Activated naive CD4-positive, alpha-beta T cell treated with anti-CD3 and anti-CD28 coated beads, Interleukin-2, amount 10 ng/mL, durations not matched to agents 7 days and 5 days (primary cell): ENCODE measurements at regions of chr12 and their contacts with region 1.

Region 1: GRCh38 chr12:112992541-112993398 is 14.5 kb downstream of the OAS2 start:
- DNase-seq: peak; percentile 81
- H3K4me3 Mint-ChIP-seq: no peak overlapping the region
- H3K27ac Mint-ChIP-seq: peak overlapping the region; percentile 46
- H3K4me1 Mint-ChIP-seq: peaks cover 40% of the 10 kb centered on the region
- H3K27me3 Mint-ChIP-seq: no peaks in the 10 kb centered on the region

Region 2: GRCh38 chr12:112524676-112525505 is 467.9 kb before region 1 on chr12:
- CTCF ChIA-PET with region 1: no interaction called
- DNase-seq: no peak
- H3K4me3 Mint-ChIP-seq: no peak overlapping the region
- H3K27ac Mint-ChIP-seq: no peak overlapping the region
- H3K4me1 Mint-ChIP-seq: no peaks in the 10 kb centered on the region
- H3K27me3 Mint-ChIP-seq: no peaks in the 10 kb centered on the region

Region 3: GRCh38 chr12:112768278-112768677 is 224.5 kb before region 1 on chr12:
- CTCF ChIA-PET with region 1: no interaction called
- DNase-seq: no peak
- H3K4me3 Mint-ChIP-seq: no peak overlapping the region
- H3K27ac Mint-ChIP-seq: no peak overlapping the region
- H3K4me1 Mint-ChIP-seq: no peaks in the 10 kb centered on the region
- H3K27me3 Mint-ChIP-seq: peaks cover 3% of the 10 kb centered on the region

Region 4: DNA sequence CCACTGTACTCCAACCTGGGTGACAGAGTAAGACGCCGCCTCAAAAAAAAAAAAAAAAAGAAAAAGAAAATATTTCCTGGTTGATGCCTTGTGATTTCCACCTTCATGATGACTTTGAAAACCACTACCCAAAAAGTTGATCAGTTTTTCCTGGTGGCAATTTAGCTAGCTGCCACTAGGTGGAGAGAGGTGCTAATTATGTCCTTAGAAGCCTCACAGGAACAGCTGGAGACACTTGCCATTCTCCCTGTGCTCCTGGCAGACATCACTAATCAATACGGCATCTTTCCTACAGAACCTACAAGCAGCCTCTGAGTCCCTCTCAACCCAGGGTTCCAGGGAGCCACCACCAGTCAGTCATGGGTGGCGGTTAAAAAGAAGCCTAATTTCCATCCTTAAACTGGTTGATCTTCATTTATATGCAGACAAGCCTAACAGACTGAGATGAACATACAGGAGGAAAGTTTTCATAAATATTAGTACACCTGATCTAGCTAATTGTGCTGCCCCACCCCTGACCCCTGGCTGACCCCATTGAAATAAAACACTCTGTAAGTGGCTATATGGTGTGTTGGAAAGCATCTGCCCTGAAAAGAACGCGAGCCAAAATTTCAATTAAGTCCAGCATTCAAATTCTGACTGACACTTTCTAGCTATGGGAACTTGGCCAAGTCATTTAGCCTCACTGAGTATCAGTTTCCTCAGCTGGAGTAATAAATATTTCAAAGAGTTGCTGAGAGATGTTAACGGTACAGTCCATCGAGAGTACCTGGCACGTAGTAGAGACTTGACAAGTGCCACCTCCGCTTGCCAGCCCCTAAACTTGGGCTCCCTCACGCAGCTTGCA is 92.2 kb before region 1 on chr12:
- CTCF ChIA-PET with region 1: interaction called, 40 read pairs
- DNase-seq: peak; percentile 57
- H3K4me3 Mint-ChIP-seq: no peak overlapping the region
- H3K27ac Mint-ChIP-seq: no peak overlapping the region
- H3K4me1 Mint-ChIP-seq: peaks cover 38% of the 10 kb centered on the region
- H3K27me3 Mint-ChIP-seq: peaks cover 29% of the 10 kb centered on the region

Region 5: DNA sequence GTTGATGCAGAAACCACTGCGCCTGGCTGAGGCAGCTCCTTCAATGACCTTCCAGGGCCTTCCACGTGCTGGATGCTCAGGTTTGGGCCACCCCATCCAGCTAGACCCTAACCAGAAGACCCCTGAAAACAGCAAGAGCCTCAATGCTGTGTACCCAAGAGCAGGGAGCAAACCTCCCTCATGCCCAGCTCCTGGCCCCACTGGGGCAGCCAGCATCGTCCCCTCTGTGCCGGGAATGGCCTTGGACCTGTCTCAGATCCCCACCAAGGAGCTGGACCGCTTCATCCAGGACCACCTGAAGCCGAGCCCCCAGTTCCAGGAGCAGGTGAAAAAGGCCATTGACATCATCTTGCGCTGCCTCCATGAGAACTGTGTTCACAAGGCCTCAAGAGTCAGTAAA is 44.0 kb before region 1 on chr12:
- CTCF ChIA-PET with region 1: interaction called, 10 read pairs
- DNase-seq: no peak
- H3K4me3 Mint-ChIP-seq: no peak overlapping the region
- H3K27ac Mint-ChIP-seq: no peak overlapping the region
- H3K4me1 Mint-ChIP-seq: no peaks in the 10 kb centered on the region
- H3K27me3 Mint-ChIP-seq: no peaks in the 10 kb centered on the region

Region 6: DNA sequence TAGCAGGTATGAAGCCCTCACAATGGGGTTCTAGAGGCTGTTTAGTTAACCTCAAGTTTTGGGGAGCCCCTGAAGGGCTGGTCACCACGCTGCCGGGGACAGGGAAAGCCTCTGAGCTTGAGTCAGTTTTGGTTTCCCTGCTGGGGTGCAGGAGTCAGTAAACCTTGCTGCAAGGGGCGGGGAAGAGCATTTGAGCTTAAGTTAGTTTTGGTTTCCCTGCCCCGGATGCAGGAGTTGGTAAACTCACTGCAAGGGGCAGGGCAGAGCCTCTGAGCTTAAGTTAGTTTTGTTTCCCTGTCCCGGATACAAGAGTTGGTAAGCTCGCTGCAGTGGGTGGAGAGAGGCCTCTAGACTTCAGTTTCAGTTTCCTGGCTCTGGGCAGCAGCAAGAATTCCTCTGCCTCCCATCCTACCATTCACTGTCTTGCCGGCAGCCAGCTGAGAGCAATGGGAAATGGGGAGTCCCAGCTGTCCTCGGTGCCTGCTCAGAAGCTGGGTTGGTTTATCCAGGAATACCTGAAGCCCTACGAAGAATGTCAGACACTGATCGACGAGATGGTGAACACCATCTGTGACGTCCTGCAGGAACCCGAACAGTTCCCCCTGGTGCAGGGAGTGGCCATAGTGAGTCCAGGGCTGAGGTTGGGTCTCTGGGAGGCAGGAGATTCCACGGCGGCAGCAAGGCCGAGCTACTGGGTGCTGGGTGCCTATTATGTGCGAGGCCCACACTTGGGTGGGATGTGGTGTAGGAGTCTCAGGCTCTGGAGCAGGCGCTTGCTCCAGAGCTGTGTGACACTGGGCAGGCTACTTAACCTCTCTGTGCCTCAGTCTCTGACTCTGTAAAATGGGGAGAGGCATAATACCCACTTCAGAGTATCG is 14.4 kb before region 1 on chr12 and contains the start of gene OAS2:
- CTCF ChIA-PET with region 1: interaction called, 106 read pairs
- DNase-seq: peak; percentile 92
- H3K4me3 Mint-ChIP-seq: peak within 1 kb of the TSS; percentile 99
- H3K27ac Mint-ChIP-seq: peak within 1 kb of the TSS; percentile 100
- H3K4me1 Mint-ChIP-seq: peaks cover 48% of the 10 kb centered on the region
- H3K27me3 Mint-ChIP-seq: peaks cover 4% of the 10 kb centered on the region

Region 7: GRCh38 chr12:113019041-113019440 is 26.3 kb after region 1 on chr12:
- CTCF ChIA-PET with region 1: interaction called, 14 read pairs
- DNase-seq: no peak
- H3K4me3 Mint-ChIP-seq: no peak overlapping the region
- H3K27ac Mint-ChIP-seq: no peak overlapping the region
- H3K4me1 Mint-ChIP-seq: peaks cover 4% of the 10 kb centered on the region
- H3K27me3 Mint-ChIP-seq: peaks cover 12% of the 10 kb centered on the region

Region 8: GRCh38 chr12:113116875-113117274 is 124.1 kb after region 1 on chr12:
- CTCF ChIA-PET with region 1: no interaction called
- DNase-seq: no peak
- H3K4me3 Mint-ChIP-seq: no peak overlapping the region
- H3K27ac Mint-ChIP-seq: no peak overlapping the region
- H3K4me1 Mint-ChIP-seq: no peaks in the 10 kb centered on the region
- H3K27me3 Mint-ChIP-seq: peaks cover 17% of the 10 kb centered on the region

Region 9: GRCh38 chr12:113152835-113153814 is 160.4 kb after region 1 on chr12:
- CTCF ChIA-PET with region 1: interaction called, 13 read pairs
- DNase-seq: peak; percentile 77
- H3K4me3 Mint-ChIP-seq: peak overlapping the region; percentile 74
- H3K27ac Mint-ChIP-seq: peak overlapping the region; percentile 80
- H3K4me1 Mint-ChIP-seq: peaks cover 42% of the 10 kb centered on the region
- H3K27me3 Mint-ChIP-seq: peaks cover 65% of the 10 kb centered on the region